CD4-positive, alpha-beta memory T cell (primary cell): ENCODE measurements at regions of chr4 and their contacts with region 1.

Region 1: DNA sequence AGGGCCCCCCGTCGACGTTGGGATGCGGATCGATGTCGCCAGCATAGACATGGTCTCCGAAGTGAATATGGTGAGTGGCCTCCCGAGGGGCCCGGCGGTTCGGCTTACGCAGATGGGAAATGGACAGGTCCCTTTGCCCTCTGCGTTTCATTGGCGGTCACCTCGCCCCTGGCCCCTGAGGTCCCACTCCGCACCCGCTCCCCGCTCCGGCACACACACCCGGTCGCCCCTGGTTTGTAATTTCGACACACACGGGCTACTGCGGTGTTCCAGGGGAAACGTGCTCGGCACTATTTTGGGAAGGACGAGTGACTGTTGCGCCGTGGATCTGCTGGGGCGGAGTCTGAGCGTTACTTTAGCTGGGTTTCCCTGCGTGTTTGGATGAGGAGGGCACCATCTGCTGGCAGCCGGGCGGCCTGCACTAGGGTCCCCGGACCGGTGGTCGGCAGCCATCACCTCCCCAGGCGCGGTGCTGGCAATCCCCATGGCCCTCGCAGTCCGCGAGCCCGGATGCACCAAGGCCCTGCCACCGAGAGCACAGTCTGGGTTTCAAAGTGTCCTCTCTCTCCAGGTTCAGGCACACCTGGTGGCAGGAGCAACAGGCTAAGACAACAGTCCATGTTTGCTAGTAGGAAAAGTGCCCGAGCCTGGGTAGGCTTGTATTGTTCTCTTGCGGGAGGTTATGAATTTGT is 1.2 kb downstream of the GABRB1 start:
- DNase-seq: peak in 3 of 5 donors; percentile 13 to 38 (median 37)
- H3K4me3 ChIP-seq: peak overlapping the region; percentile 23 to 29
- H3K4me3 Mint-ChIP-seq: peak overlapping the region; percentile 71 to 92 (median 78)
- H3K27ac ChIP-seq: no peak overlapping the region
- H3K27ac Mint-ChIP-seq: no peak overlapping the region
- H3K4me1 ChIP-seq: peaks cover 22% of the 10 kb centered on the region
- H3K4me1 Mint-ChIP-seq: peaks cover 12 to 22% (median 17%) of the 10 kb centered on the region in 4 donors
- H3K27me3 ChIP-seq: peaks cover 28% of the 10 kb centered on the region
- H3K27me3 Mint-ChIP-seq: peaks cover 27 to 29% of the 10 kb centered on the region in 2 donors

Region 2: DNA sequence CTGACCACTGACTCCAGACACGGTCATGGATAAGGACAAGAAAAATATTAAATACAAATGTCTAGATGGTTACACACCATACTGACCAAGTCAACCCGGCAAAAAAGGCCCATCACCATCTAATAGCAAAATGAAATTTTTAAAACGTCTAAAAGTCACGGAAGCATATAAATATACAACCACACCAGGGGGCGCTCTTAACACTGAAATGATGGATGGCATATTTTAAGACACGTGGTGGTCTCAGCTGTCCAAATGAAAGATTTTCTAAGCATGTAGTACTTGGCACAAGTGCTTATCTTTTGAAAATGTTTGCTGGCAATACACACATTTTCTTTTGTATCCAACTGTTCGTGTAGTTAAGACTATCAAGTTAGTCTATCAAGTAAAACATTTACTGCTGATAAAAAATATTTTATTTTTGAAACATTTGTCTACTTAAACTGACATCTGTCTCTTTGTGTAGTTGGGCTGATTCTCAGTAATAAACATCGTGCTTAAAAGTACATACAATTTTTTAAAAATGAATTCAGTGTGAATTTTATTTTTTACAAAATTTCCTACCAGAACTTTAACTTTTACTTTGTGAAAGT is 188.1 kb before region 1 on chr4:
- CTCF ChIA-PET with region 1: interaction called, 3 read pairs
- POLR2A ChIA-PET with region 1: no interaction called
- intact Hi-C with region 1: loop called (anchors 5 kb)
- DNase-seq: peak in 4 of 5 donors; percentile 12 to 26 (median 20)
- H3K4me3 ChIP-seq: no peak overlapping the region
- H3K4me3 Mint-ChIP-seq: no peak overlapping the region
- H3K27ac ChIP-seq: no peak overlapping the region
- H3K27ac Mint-ChIP-seq: no peak overlapping the region
- H3K4me1 ChIP-seq: no peaks in the 10 kb centered on the region
- H3K4me1 Mint-ChIP-seq: peaks cover 0 to under 1% (median under 1%) of the 10 kb centered on the region in 4 donors
- H3K27me3 ChIP-seq: no peaks in the 10 kb centered on the region
- H3K27me3 Mint-ChIP-seq: no peaks in the 10 kb centered on the region

Region 3: DNA sequence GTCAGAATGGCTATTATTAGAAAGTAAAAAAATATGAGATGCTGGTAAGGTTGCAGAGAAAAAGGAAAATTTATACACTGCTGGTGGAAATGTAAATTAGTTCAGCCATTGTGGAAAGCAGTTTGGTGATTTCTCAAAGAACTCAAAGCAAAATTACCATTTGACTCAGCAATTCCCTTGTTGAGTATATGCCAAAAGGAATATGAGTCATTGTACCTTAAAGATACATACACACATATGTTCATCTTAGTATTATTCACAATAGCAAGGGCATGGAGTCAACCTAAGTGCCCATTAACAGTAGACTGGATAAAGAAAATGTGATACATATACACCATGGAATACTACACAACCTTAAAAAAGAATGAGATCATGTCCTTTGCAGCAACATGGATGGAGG is 282.8 kb after region 1 on chr4:
- CTCF ChIA-PET with region 1: no interaction called
- POLR2A ChIA-PET with region 1: no interaction called
- intact Hi-C with region 1: no loop called
- DNase-seq: no peak
- H3K4me3 ChIP-seq: no peak overlapping the region
- H3K4me3 Mint-ChIP-seq: no peak overlapping the region
- H3K27ac ChIP-seq: no peak overlapping the region
- H3K27ac Mint-ChIP-seq: no peak overlapping the region
- H3K4me1 ChIP-seq: no peaks in the 10 kb centered on the region
- H3K4me1 Mint-ChIP-seq: no peaks in the 10 kb centered on the region
- H3K27me3 ChIP-seq: no peaks in the 10 kb centered on the region
- H3K27me3 Mint-ChIP-seq: peaks cover 0 to 2% of the 10 kb centered on the region in 2 donors

Region 4: GRCh38 chr4:47907089-47907646 is 874.6 kb after region 1 on chr4:
- CTCF ChIA-PET with region 1: no interaction called
- POLR2A ChIA-PET with region 1: no interaction called
- intact Hi-C with region 1: no loop called
- DNase-seq: no peak
- H3K4me3 ChIP-seq: no peak overlapping the region
- H3K4me3 Mint-ChIP-seq: no peak overlapping the region
- H3K27ac ChIP-seq: no peak overlapping the region
- H3K27ac Mint-ChIP-seq: peak overlapping the region in 2 of 7 donors; percentile 5 to 30
- H3K4me1 ChIP-seq: peaks cover 4% of the 10 kb centered on the region
- H3K4me1 Mint-ChIP-seq: peaks cover 19 to 23% (median 21%) of the 10 kb centered on the region in 4 donors
- H3K27me3 ChIP-seq: no peaks in the 10 kb centered on the region
- H3K27me3 Mint-ChIP-seq: no peaks in the 10 kb centered on the region